Posterior vena cava (tissue), 2 donors: ENCODE measurements at regions of chr7 and their contacts with region 1.

Region 1: GRCh38 chr7:141014524-141015395 is at the start of gene MRPS33:
- DNase-seq: peak; percentile 98
- total RNA-seq, gene MRPS33: 26.9 to 32.5 TPM

Region 2: GRCh38 chr7:140653319-140654108 is 361.2 kb before region 1 on chr7:
- intact Hi-C with region 1: loop called in 1 of 2 experiments (anchors 5 kb)
- DNase-seq: peak; percentile 76

Region 3: DNA sequence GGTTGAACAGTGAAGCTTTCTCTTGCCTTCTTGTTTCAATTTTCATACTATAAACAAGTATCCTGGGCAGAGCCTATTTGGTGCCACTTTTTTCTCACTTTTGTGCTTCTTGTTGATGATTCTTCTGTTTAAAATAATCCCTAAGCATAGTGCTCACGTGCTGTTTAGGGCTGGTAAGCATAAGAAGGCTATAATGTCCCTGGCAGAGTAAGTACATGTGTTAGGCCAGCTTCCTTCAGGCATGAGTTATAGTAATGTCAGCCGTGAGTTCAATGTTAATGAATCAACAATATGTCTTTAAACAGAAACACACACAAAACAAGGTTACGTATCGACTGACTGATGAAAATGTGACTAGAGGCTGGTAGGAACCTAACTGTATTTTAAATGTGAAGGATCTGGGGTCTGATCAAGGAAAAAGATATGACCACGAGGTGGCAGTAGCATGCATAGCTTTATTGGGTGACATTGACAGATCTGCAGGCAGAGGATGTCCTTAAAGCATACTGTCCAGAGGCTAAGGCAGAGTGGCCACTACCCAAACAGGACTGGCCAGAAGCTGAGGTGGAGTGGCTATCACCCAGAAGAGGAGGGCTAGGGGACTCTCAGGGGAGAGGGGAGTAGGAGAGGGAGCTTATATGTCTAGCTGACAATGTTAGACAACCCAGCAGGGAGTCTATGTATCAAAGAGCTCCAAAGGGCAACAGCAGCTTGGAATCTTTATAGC is 203.8 kb before region 1 on chr7:
- intact Hi-C with region 1: loop called in 1 of 2 experiments (anchors 5 kb)
- DNase-seq: no peak

Region 4: DNA sequence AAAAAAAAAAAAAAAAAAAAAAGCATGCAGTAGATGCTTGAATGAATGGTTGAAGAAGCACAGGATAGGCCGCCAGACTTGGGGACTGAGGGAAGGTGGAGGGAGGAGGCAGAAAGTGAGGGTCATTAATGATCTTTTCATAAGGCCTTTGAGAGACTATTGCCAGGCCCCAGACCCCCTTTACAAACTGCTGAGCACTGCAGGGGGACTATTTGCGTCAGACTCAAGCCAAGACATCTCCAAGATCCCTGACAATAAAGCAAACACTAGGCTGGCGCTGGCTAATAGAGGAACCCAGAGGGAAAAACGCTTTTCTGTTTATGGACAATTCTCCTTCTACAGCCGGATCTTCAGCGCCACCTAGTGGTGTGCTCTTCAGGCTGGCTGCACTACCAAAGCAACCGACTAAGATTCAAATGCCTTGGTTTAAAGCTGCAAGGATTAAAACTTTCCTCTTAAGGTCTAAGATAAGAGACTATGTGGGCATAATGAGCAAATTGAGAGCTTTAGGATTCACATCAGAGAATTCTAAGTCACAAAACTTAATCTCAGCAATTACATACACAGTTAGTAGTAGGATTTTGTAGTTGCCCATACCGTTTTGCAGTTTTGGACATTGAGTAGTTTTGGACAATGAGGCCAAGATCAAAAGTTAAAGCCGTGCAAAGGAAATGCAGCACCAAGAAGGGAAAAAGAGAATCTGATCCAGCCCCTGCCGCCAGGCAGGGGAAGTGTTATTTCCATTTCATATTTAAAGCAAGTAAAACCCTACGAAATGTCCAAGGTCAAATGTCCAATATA is 518.6 kb after region 1 on chr7:
- intact Hi-C with region 1: loop called in 1 of 2 experiments (anchors 10 kb)
- DNase-seq: peak; percentile 88